ENCODE measurements at regions of chr15 and their contacts with region 1.

Region 1: DNA sequence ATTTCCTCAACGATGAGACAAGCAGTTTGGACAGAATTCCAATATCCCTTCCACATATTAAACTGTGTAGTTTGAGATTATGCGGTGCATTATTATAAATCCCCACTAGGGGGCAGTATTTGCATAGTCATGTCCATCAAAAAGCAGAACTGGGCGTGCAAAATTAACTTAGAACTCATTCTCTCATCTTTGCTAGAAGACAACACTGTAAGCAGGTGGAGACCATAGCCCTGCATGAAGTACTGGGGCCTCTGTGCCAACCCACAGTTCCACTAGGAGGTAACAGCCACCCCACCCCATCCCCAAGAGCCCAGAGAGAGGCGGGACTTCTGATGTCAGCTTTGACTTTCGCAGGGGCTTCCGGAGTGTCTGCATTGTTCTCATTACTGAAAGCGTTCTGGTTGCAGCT is 106.6 kb upstream of the TMC3 start:
- H3K4me3 Mint-ChIP-seq: no peak overlapping the region
- H3K27ac Mint-ChIP-seq: no peak overlapping the region
- H3K4me1 Mint-ChIP-seq: no peaks in the 10 kb centered on the region
- H3K27me3 Mint-ChIP-seq: no peaks in the 10 kb centered on the region

Region 2: DNA sequence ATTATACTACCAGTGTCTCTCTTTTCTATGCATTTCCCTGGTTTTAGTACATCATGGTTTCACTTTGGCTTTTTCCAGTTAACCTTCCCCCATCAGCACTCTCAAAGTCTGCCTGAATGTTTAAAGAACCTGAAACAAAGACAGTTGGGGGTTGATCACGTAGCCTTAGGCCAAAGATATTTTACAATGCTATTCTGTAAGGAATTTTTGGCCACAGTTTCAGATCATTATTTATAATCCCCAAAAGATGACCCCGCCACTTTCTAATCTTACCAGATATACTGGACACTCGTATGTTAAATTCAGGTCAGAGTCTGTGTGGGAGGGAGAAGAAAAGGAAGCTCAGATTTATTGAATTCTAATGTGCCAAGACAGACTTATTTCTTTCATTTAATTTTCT is 49.7 kb after region 1 on chr15:
- intact Hi-C with region 1: no loop called
- H3K4me3 Mint-ChIP-seq: no peak overlapping the region
- H3K27ac Mint-ChIP-seq: no peak overlapping the region
- H3K4me1 Mint-ChIP-seq: no peaks in the 10 kb centered on the region
- H3K27me3 Mint-ChIP-seq: no peaks in the 10 kb centered on the region

Region 3: GRCh38 chr15:81939604-81940440 is 459.2 kb after region 1 on chr15:
- intact Hi-C with region 1: loop called (anchors 1 kb)
- H3K4me3 Mint-ChIP-seq: no peak overlapping the region
- H3K27ac Mint-ChIP-seq: no peak overlapping the region
- H3K4me1 Mint-ChIP-seq: no peaks in the 10 kb centered on the region
- H3K27me3 Mint-ChIP-seq: peaks cover 2% of the 10 kb centered on the region

Region 4: DNA sequence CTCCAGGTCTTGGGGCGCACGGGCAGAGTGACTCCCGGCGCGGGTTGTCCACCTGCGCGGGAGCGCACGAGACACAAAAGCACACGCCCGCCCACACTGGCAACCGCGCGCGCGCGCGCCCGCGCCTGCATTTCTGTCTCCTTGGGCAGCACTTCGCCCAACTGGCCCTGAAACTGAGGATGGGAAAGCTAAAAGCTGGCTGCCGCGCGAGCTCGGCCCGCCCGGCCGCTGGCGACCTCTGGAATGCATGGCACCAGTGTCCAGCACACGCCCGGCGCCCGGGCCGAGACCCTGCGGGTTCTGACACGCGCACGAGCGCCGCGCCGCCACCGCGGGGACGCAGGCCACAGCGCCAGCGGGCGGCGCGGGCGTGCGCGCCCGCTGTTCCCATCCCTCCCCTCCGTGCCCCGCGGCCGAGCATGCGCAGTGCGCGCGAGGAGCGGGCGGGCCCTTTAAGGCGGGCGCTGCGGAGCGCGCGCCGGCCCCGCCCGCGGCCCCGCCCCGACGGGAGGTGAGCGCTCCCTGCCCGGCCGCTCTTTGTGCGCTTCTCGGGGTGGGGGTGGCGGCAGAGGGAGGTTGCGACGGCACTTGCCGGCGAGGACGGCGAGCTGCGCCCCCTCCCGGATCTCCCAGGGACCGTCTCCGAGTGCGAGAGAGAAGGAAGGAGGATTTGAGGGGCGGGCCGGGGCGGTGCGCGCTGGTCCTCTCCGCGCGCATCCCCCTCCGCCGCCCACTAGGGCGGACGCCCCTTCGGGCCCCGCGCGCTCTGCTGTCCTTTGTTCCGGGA is 566.2 kb after region 1 on chr15:
- intact Hi-C with region 1: loop called (anchors 2 kb)
- H3K4me3 Mint-ChIP-seq: peak overlapping the region; percentile 93
- H3K27ac Mint-ChIP-seq: peak overlapping the region; percentile 99
- H3K4me1 Mint-ChIP-seq: peaks cover 28% of the 10 kb centered on the region
- H3K27me3 Mint-ChIP-seq: peaks cover 29% of the 10 kb centered on the region

Region 5: GRCh38 chr15:82197733-82198594 is 717.3 kb after region 1 on chr15:
- intact Hi-C with region 1: loop called (anchors 1 kb)
- H3K4me3 Mint-ChIP-seq: no peak overlapping the region
- H3K27ac Mint-ChIP-seq: no peak overlapping the region
- H3K4me1 Mint-ChIP-seq: no peaks in the 10 kb centered on the region
- H3K27me3 Mint-ChIP-seq: no peaks in the 10 kb centered on the region

Measured in dendritic cell treated with granulocyte-macrophage colony-stimulating factor and Interleukin-4, amounts not matched to agents 40 ng/mL and 50 ng/mL, for 4 days (primary cell).